ENCODE measurements at regions of chr17 and their contacts with region 1.

Region 1: GRCh38 chr17:4789901-4790704 is 1.3 kb downstream of the GLTPD2 start:
- DNase-seq: peak; percentile 94 to 99
- ATAC-seq: peak; percentile 89 to 92
- H3K4me3 ChIP-seq: peak overlapping the region; percentile 62
- H3K27ac ChIP-seq: peak overlapping the region; percentile 91 to 98
- H3K4me1 ChIP-seq: peaks cover 27% of the 10 kb centered on the region
- CTCF ChIP-seq: peak; percentile 95
- EP300 ChIP-seq: no peak; a peak in 1 of 5 replicates
- POLR2A ChIP-seq: peak; percentile 90
- RAD21 ChIP-seq: peak; percentile 43 to 75; a peak in 4 of 5 replicates

Region 2: GRCh38 chr17:4703330-4703691 is 86.8 kb before region 1 on chr17:
- CTCF ChIA-PET with region 1: interaction called, 108 read pairs
- POLR2A ChIA-PET with region 1: interaction called, 11 read pairs
- DNase-seq: no peak
- ATAC-seq: no peak
- H3K4me3 ChIP-seq: peak overlapping the region; percentile 93
- H3K27ac ChIP-seq: peak overlapping the region; percentile 91 to 95
- H3K4me1 ChIP-seq: peaks cover 32% of the 10 kb centered on the region
- CTCF ChIP-seq: no peak
- EP300 ChIP-seq: no peak
- POLR2A ChIP-seq: no peak
- RAD21 ChIP-seq: no peak

Region 3: GRCh38 chr17:4733073-4733531 is 57.0 kb before region 1 on chr17:
- CTCF ChIA-PET with region 1: interaction called, 115 read pairs
- POLR2A ChIA-PET with region 1: interaction called, 25 read pairs
- DNase-seq: no peak
- ATAC-seq: no peak
- H3K4me3 ChIP-seq: no peak overlapping the region
- H3K27ac ChIP-seq: no peak overlapping the region
- H3K4me1 ChIP-seq: peaks cover 17% of the 10 kb centered on the region
- CTCF ChIP-seq: no peak
- EP300 ChIP-seq: no peak
- POLR2A ChIP-seq: no peak
- RAD21 ChIP-seq: peak in 1 of 2 experiments; percentile 14; a peak in 1 of 5 replicates

Region 4: DNA sequence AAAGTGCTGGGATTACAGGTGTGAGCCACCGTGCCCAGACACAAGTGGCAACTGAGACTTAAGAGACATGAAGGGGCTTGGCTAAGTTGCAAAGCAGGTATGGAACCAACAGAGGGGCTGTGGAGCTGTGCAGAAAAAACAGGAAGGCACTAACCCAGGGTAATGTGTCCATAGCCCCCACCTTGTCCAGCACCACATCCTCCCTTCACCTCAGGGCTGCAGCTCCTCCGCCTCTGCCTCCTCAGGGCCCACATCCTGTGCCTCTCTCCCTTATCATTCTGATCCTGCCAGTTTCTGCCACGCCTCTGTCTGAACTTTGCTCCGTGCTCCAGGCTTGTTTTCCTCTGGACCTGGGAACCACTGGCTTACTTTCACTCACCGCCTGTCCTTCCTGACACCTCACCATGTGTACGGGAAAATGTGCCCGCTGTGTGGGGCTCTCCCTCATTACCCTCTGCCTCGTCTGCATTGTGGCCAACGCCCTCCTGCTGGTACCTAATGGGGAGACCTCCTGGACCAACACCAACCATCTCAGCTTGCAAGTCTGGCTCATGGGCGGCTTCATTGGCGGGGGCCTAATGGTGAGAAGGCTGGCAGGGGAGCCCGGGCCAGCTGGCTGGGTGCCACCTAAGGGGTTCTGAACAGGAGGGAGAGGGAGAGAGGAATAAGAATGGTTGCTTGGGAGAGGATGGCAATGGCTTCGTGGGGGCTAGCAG is 18.4 kb before region 1 on chr17 and contains the start of gene TM4SF5:
- CTCF ChIA-PET with region 1: interaction called, 157 read pairs
- POLR2A ChIA-PET with region 1: no interaction called
- DNase-seq: peak in 1 of 2 experiments; percentile 60
- ATAC-seq: peak; percentile 79 to 84
- H3K4me3 ChIP-seq: no peak within 1 kb of the TSS
- H3K27ac ChIP-seq: peak within 1 kb of the TSS in 1 of 2 experiments; percentile 53; a peak in 4 of 6 replicates
- H3K4me1 ChIP-seq: peaks cover 15% of the 10 kb centered on the region
- CTCF ChIP-seq: no peak
- EP300 ChIP-seq: no peak
- POLR2A ChIP-seq: no peak
- RAD21 ChIP-seq: no peak
- polyA plus RNA-seq, gene TM4SF5: 0.80 and 1.2 TPM in 2 replicates

Region 5: DNA sequence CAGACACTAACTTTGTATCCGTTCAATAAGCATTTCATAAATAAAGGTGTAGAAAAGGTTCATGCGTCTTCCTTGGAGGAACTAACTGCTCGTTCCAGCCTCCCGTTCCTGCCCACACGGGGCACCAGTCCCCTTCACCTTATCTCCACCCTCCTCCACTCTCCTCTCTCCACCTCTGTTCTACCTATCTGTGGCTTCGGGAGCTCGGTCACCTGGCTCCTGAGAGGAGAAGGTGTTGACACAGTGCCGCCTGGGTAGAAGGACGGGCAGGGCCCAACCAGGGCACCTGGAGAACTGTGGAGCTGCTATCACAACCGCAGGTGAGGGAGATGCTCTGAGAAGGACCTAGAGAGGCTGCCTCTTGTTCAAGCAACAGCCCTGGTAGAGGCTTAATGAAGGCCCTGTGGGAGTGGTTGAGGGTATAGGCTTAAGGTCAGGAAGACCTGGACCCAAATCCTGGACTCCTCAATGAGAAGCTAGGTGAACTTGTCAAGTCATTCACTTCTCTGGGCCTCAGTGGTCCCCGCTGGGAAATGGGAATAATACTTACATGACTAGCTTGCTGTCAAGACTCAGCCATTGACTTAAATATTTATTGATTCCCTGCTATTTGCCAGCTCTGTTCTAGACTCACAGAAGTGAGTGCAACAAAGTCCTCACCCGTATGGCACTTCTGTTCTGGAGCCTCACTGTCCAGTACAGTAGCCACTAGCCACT is 33.4 kb after region 1 on chr17:
- CTCF ChIA-PET with region 1: interaction called, 14 read pairs
- POLR2A ChIA-PET with region 1: interaction called, 4 read pairs
- DNase-seq: no peak
- ATAC-seq: peak; percentile 18 to 49; a peak in 3 of 6 replicates
- H3K4me3 ChIP-seq: no peak overlapping the region
- H3K27ac ChIP-seq: no peak overlapping the region
- H3K4me1 ChIP-seq: no peaks in the 10 kb centered on the region
- CTCF ChIP-seq: no peak
- EP300 ChIP-seq: no peak
- POLR2A ChIP-seq: no peak
- RAD21 ChIP-seq: no peak

Region 6: DNA sequence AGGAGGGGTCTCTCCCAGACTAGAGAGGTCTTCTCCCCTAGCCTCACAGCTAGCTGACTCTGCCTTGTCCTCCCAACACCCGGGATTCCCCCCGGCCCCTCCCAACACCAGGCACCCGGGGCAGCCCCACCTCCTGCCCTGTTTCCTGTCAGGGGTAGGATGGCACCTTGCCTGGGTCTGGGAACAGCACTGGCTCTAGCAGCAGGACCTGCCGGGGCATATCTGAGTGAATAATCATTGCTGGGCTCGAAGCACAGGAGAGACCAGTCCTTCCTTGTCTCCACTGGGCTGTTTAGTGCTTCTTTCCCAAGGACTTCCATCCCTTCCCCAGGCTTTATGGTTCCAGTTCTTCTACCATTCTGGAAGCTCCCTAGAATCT is 68.8 kb after region 1 on chr17:
- CTCF ChIA-PET with region 1: interaction called, 23 read pairs
- POLR2A ChIA-PET with region 1: interaction called, 6 read pairs
- DNase-seq: no peak
- ATAC-seq: peak; percentile 51 to 64; a peak in 4 of 6 replicates
- H3K4me3 ChIP-seq: no peak overlapping the region
- H3K27ac ChIP-seq: peak overlapping the region; percentile 5 to 76; a peak in 4 of 6 replicates
- H3K4me1 ChIP-seq: peaks cover 24% of the 10 kb centered on the region
- CTCF ChIP-seq: no peak
- EP300 ChIP-seq: no peak
- POLR2A ChIP-seq: no peak
- RAD21 ChIP-seq: no peak

Region 7: GRCh38 chr17:4966844-4967538 is 176.9 kb after region 1 on chr17:
- CTCF ChIA-PET with region 1: interaction called, 3 read pairs
- POLR2A ChIA-PET with region 1: interaction called, 12 read pairs
- DNase-seq: peak; percentile 100
- ATAC-seq: peak; percentile 89 to 95
- H3K4me3 ChIP-seq: peak overlapping the region; percentile 63
- H3K27ac ChIP-seq: peak overlapping the region; percentile 94 to 95
- H3K4me1 ChIP-seq: peaks cover 21% of the 10 kb centered on the region
- CTCF ChIP-seq: no peak
- EP300 ChIP-seq: no peak
- POLR2A ChIP-seq: peak; percentile 59; the same call in 1 of the 2 replicates
- RAD21 ChIP-seq: peak in 1 of 2 experiments; percentile 10; a peak in 1 of 5 replicates

Measured in A549 (cell line).